ENCODE measurements at regions of chr12 and their contacts with region 1.

Region 1: DNA sequence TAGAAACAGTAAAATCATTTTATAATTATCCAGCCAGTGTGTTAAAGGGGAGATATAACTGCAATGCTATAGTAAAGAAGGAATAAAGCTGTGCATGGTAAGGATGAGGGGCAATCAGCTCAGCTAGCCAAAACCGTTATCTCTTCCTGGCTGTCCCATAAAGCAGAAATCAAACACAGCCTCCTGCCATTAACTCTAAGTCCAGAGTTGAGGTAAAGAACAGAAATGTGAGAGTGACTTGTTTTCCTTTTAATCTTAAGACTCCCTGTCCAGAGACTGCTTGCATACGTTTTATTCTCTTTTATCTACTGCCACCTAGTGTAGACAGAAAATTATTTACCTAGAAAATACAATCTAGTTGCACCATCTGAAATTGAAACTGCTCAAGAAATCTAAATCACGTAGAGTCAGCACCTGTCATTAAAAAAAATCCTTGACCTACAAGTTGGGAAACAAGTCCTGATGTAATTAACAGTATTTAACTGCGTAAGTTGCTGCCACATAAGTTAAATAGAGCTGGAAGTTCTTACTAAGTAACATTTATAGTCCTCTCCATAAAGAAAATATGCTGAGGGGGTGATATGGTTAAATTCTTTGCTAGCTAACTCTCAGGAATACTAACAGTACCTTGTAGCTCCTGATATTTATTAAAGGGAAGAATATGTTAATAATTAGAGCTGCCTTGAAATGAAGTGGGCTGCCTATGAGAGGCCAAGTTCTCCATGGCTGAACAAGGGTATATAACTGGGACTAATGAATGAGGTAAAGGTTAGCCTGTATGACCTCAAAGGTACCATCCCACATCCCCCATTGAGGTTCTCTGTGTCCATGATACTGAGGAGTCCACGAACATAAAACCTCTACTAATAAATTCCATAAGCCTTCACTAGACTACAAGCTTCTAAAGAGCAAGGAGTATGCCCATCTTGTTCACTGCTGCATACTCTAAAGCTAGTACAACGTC is 62.7 kb downstream of the GALNT4 start:
- DNase-seq: peak in 1 of 2 experiments; percentile 43
- H3K4me3 ChIP-seq: no peak overlapping the region
- H3K4me3 Mint-ChIP-seq: no peak overlapping the region
- H3K27ac Mint-ChIP-seq: no peak overlapping the region
- H3K4me1 ChIP-seq: no peaks in the 10 kb centered on the region; the same call in 1 of the 2 replicates
- H3K4me1 Mint-ChIP-seq: peaks cover 11% of the 10 kb centered on the region
- H3K27me3 ChIP-seq: no peaks in the 10 kb centered on the region
- H3K27me3 Mint-ChIP-seq: no peaks in the 10 kb centered on the region
- CTCF ChIP-seq: peak; percentile 23 to 49

Region 2: DNA sequence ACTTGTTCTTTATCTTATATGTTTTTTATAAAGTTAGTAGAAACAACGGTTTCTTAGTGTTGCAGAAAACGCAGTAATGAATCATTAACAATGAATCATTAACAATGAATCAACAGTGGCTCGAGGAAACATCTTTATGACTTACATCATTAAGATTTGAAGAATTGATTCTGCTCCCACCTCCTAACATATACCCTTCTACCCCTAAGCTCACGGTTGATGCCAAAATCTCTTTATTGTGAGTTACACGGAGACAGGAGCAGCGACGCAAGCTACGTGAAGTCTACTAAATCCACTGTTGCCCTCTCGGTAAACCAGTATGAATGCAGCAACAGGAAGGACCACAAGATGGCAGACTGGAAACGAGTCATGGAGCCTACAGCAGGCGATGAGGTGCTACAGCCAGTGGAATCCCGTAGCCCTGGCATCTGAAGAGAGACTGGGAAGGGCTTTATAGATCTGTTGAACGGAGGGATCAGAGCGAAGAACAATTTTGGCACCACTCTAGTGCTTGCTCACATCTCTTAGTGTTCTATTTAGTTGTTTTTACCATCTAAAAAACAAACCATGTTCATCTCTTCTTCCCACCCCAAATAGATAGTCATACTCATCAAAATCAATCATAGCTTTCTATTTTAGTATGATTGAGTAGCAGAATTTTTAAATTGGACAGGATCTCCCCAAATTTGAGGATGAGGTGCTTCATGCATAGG is 442.4 kb before region 1 on chr12:
- CTCF ChIA-PET with region 1: interaction called, 7 read pairs
- POLR2A ChIA-PET with region 1: no interaction called
- intact Hi-C with region 1: loop called (anchors 1 kb)
- DNase-seq: peak; percentile 80 to 82
- H3K4me3 ChIP-seq: peak overlapping the region; percentile 36
- H3K4me3 Mint-ChIP-seq: no peak overlapping the region
- H3K27ac Mint-ChIP-seq: no peak overlapping the region
- H3K4me1 ChIP-seq: peaks cover 11% of the 10 kb centered on the region
- H3K4me1 Mint-ChIP-seq: peaks cover 10% of the 10 kb centered on the region
- H3K27me3 ChIP-seq: no peaks in the 10 kb centered on the region
- H3K27me3 Mint-ChIP-seq: no peaks in the 10 kb centered on the region
- CTCF ChIP-seq: peak; percentile 83 to 85

Region 3: GRCh38 chr12:89162704-89163261 is 299.1 kb before region 1 on chr12:
- CTCF ChIA-PET with region 1: no interaction called
- POLR2A ChIA-PET with region 1: no interaction called
- intact Hi-C with region 1: loop called (anchors 10 kb)
- DNase-seq: no peak
- H3K4me3 ChIP-seq: no peak overlapping the region
- H3K4me3 Mint-ChIP-seq: no peak overlapping the region
- H3K27ac Mint-ChIP-seq: no peak overlapping the region
- H3K4me1 ChIP-seq: no peaks in the 10 kb centered on the region
- H3K4me1 Mint-ChIP-seq: peaks cover 2% of the 10 kb centered on the region
- H3K27me3 ChIP-seq: no peaks in the 10 kb centered on the region
- H3K27me3 Mint-ChIP-seq: no peaks in the 10 kb centered on the region
- CTCF ChIP-seq: no peak

Region 4: DNA sequence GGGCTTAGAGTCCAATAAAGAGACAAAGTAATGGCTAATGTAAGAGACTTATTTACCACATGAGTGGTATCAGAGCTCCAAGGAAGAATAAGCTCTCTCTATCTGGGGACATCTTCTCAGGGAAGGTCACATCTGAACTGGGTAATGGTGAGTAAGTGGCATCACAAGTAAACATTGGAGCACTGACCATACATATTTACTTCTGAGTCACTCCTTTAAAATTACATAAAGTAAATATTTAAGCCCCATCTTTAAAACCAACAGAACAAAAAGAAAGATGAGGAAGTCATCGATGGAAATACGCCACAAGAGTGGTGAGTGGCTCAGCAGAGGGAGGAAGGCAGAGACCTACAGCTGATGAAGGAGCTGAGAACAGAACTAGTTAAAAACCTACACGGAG is 269.5 kb before region 1 on chr12:
- CTCF ChIA-PET with region 1: no interaction called
- POLR2A ChIA-PET with region 1: no interaction called
- intact Hi-C with region 1: no loop called
- DNase-seq: no peak
- H3K4me3 ChIP-seq: no peak overlapping the region
- H3K4me3 Mint-ChIP-seq: no peak overlapping the region
- H3K27ac Mint-ChIP-seq: no peak overlapping the region
- H3K4me1 ChIP-seq: no peaks in the 10 kb centered on the region
- H3K4me1 Mint-ChIP-seq: peaks cover 5% of the 10 kb centered on the region
- H3K27me3 ChIP-seq: no peaks in the 10 kb centered on the region
- H3K27me3 Mint-ChIP-seq: no peaks in the 10 kb centered on the region
- CTCF ChIP-seq: no peak

Region 5: DNA sequence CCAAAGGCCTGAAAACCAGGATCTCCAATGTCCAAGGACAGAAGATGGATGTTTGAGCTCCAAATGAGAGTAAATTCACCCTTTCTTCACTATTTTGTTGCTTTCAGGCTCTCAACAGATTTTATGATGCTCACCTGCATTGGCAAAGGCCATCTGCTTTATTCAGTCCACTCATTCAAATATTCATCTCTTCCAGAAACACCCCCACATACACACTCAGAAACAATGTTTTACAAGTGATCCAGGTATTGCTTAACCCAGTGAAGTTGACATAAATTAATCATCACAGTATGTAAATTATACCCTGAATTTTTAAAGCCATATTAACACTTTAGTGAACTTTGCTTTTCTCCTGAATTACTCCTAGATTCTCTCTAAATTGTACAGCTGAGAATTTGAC is 173.0 kb before region 1 on chr12:
- CTCF ChIA-PET with region 1: no interaction called
- POLR2A ChIA-PET with region 1: no interaction called
- intact Hi-C with region 1: no loop called
- DNase-seq: no peak
- H3K4me3 ChIP-seq: no peak overlapping the region
- H3K4me3 Mint-ChIP-seq: no peak overlapping the region
- H3K27ac Mint-ChIP-seq: no peak overlapping the region
- H3K4me1 ChIP-seq: no peaks in the 10 kb centered on the region
- H3K4me1 Mint-ChIP-seq: no peaks in the 10 kb centered on the region
- H3K27me3 ChIP-seq: no peaks in the 10 kb centered on the region
- H3K27me3 Mint-ChIP-seq: no peaks in the 10 kb centered on the region
- CTCF ChIP-seq: no peak

Region 6: DNA sequence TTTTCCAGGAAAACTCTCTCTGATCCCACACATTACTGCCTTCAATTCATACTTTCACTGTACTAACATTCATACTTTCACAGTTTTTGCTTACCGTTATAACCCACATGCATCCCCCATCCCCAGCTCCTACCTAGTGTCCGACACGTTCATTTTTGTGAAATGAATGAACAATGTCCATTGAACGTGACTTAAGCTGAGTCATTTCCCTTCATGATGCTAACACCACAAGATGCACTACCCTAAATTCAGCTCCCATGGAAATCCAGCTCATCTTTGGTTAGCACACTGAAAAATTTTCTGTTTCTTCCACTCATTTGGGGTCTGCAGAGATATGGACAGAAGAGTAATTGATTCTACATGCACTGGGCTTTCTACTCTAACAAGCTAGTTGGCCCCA is 22.0 kb before region 1 on chr12:
- CTCF ChIA-PET with region 1: no interaction called
- POLR2A ChIA-PET with region 1: no interaction called
- intact Hi-C with region 1: no loop called
- DNase-seq: no peak
- H3K4me3 ChIP-seq: no peak overlapping the region
- H3K4me3 Mint-ChIP-seq: no peak overlapping the region
- H3K27ac Mint-ChIP-seq: no peak overlapping the region
- H3K4me1 ChIP-seq: no peaks in the 10 kb centered on the region
- H3K4me1 Mint-ChIP-seq: no peaks in the 10 kb centered on the region
- H3K27me3 ChIP-seq: no peaks in the 10 kb centered on the region
- H3K27me3 Mint-ChIP-seq: no peaks in the 10 kb centered on the region
- CTCF ChIP-seq: no peak